Psoas muscle (tissue), 8 donors: ENCODE measurements at regions of chr14 and their contacts with region 1.

Region 1: GRCh38 chr14:20682435-20683124 is 1.8 kb upstream of the RNASE4 start:
- DNase-seq: peak; percentile 88 to 94
- ATAC-seq: peak; percentile 84 to 87 (median 86)
- H3K4me3 ChIP-seq: peak overlapping the region; percentile 89
- H3K27ac ChIP-seq: peak overlapping the region; percentile 99
- H3K4me1 ChIP-seq: peaks cover 17% of the 10 kb centered on the region
- H3K27me3 ChIP-seq: no peaks in the 10 kb centered on the region
- CTCF ChIP-seq: no peak

Region 2: DNA sequence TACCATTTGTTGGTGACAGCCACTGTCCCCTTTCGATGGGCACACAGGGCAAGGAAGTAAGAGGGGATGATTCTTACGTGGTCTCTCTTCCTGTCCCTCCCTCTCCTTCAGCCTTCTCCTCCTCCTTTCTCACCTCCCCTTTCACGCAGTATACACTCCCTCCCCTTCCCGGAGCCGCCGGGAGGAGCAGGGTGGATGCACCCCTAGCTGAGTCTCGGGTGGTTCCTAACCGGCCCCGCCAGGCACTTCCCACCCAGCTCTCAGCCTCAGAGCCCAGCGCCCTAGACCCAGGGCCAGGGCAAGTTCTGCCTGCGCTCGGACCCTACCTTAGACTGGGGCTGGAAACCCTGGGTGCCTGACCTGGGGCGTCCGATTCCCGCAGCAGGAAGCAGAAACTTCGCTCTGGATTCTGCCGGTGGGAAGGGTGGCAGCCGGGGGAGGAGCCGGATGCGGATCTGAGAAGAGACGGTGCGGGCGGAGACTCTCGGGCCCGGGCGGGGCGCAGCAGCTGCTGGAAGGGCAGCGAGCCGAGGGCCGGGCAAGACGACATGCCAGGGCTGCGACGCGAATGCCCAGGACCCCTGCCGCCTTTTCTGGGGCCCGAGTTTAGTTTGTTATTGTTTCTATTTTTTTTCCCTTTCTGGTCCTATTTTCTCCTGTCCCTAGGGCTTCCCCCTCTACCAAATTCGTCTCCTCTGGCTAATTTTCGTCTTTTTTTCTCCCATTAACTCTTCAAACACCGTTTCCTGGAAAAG is 269.4 kb before region 1 on chr14 and contains the start of gene TEP1:
- intact Hi-C with region 1: loop called in 1 of 2 experiments (anchors 5 kb)
- DNase-seq: peak; percentile 91 to 94
- ATAC-seq: peak; percentile 89 to 95 (median 92)
- H3K4me3 ChIP-seq: peak within 1 kb of the TSS; percentile 92
- H3K27ac ChIP-seq: peak within 1 kb of the TSS; percentile 100
- H3K4me1 ChIP-seq: peaks cover 31% of the 10 kb centered on the region
- H3K27me3 ChIP-seq: no peaks in the 10 kb centered on the region
- CTCF ChIP-seq: no peak
- total RNA-seq, gene TEP1: 14.7 to 44.8 (median 21.2) TPM

Region 3: DNA sequence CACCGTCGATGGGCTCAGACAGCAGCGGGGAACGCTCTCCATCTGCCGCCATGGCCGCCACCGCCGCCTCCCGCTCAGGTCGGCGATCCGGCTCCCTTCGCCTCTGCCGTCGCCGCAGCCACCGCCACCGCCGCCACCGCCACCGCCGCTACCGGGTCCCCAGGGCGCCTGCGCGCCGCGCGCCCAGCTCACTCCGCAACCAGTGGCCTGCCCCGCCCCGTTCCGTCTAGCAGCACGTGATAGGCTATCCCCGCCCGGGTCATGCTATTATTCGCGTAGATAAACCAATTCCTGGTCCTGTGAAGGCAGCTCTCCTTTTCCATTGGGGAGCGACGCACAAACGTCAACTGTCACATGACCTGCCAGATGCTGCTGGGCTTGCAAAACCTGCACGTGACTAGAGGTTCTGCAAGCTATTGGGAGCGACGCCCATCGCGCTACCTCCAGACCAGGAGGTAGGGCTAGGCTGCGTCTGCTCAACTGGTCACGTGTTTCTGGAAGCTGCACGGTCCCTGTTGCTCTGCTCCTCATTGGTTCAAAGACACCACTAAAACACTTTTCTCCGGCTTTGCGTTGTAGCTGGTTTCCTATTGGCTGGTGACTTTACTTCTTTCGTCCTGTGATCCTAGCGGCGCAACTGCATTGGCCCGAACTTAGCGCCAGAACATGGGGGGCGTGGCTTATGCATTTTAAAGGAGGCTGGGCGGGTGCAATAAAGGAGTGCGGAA is 221.1 kb before region 1 on chr14 and contains the start of gene PIP4P1:
- intact Hi-C with region 1: loop called (anchors 5 to 10 kb)
- DNase-seq: peak; percentile 99
- ATAC-seq: peak; percentile 95 to 96 (median 96)
- H3K4me3 ChIP-seq: peak within 1 kb of the TSS; percentile 87
- H3K27ac ChIP-seq: peak within 1 kb of the TSS; percentile 95
- H3K4me1 ChIP-seq: peaks cover 16% of the 10 kb centered on the region
- H3K27me3 ChIP-seq: no peaks in the 10 kb centered on the region
- CTCF ChIP-seq: no peak
- total RNA-seq, gene PIP4P1: 15.6 to 29.7 (median 20.7) TPM

Region 4: GRCh38 chr14:20714593-20715250 is 32.1 kb after region 1 on chr14:
- intact Hi-C with region 1: no loop called
- DNase-seq: peak; percentile 71 to 84
- ATAC-seq: peak; percentile 36 to 73 (median 58)
- H3K4me3 ChIP-seq: no peak overlapping the region
- H3K27ac ChIP-seq: no peak overlapping the region
- H3K4me1 ChIP-seq: no peaks in the 10 kb centered on the region
- H3K27me3 ChIP-seq: peaks cover 0 to 4% (median 0%) of the 10 kb centered on the region in 3 donors
- CTCF ChIP-seq: no peak

Region 5: GRCh38 chr14:21092273-21093011 is 409.9 kb after region 1 on chr14:
- intact Hi-C with region 1: loop called in 1 of 2 experiments (anchors 10 kb)
- DNase-seq: peak; percentile 83 to 92
- ATAC-seq: peak; percentile 91 to 95 (median 92)
- H3K4me3 ChIP-seq: no peak overlapping the region
- H3K27ac ChIP-seq: no peak overlapping the region
- H3K4me1 ChIP-seq: peaks cover 4% of the 10 kb centered on the region
- H3K27me3 ChIP-seq: no peaks in the 10 kb centered on the region
- CTCF ChIP-seq: peak; percentile 100